ENCODE measurements at regions of chr2 and their contacts with region 1.

Region 1: DNA sequence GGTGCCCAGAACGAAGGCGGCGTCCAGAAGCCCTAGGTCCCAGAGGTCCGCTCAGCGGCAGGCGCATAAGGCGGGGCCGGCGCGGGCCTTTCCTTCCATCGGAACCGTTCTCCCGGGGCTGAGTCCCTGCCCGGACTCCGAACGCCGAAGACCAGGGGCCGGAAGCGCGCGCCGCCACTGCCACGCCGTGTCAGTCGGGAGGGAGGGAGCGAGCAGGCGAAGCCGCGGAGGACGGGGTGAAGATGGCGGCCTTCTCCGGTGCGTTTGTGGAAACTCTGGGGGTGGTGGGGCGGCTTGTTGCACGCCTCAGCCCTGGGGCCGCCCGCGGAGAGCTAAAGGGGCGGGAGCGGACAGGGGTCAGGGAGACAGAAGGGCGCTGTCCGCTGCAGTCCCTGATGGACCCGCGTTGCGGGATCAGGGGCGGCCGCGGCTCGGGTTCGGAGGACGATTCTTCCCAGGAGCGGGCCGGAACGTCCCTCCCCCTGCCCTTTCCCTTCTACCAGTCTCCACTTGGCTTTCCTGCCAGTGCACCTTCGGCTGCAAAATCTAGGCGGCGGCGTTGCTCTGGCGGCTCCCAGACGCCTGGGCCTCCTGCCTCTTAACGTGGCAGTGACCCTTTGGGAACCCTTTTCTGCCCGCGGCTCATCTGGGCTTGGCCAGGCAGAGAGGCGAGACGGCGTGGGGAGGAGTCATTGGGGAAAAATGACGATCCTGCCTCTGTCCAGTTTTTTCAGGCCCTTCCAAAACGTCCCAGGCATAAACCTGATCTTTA is at the start of gene DDX1:
- DNase-seq: peak; percentile 90
- ATAC-seq: peak; percentile 91
- H3K4me3 ChIP-seq: peak within 1 kb of the TSS; percentile 71 to 97 (median 92)
- H3K4me3 Mint-ChIP-seq: peak within 1 kb of the TSS; percentile 90
- H3K27ac ChIP-seq: peak within 1 kb of the TSS; percentile 68 to 69
- H3K27ac Mint-ChIP-seq: peak within 1 kb of the TSS; percentile 90
- H3K4me1 ChIP-seq: peaks cover 12 to 18% of the 10 kb centered on the region in 2 donors
- H3K4me1 Mint-ChIP-seq: peaks cover 29% of the 10 kb centered on the region
- H3K27me3 ChIP-seq: no peaks in the 10 kb centered on the region
- H3K27me3 Mint-ChIP-seq: no peaks in the 10 kb centered on the region
- CTCF ChIP-seq: no peak
- total RNA-seq, gene DDX1: 50.5 and 52.6 TPM in 2 replicates

Region 2: GRCh38 chr2:15142069-15142873 is 449.6 kb before region 1 on chr2:
- CTCF ChIA-PET with region 1: no interaction called
- POLR2A ChIA-PET with region 1: no interaction called
- intact Hi-C with region 1: loop called (anchors 2 kb)
- DNase-seq: peak; percentile 88
- ATAC-seq: peak; percentile 97
- H3K4me3 ChIP-seq: peak overlapping the region in 3 of 5 experiments; percentile 13 to 28 (median 18)
- H3K4me3 Mint-ChIP-seq: peak overlapping the region; percentile 40
- H3K27ac ChIP-seq: peak overlapping the region; percentile 47 to 69
- H3K27ac Mint-ChIP-seq: peak overlapping the region; percentile 76
- H3K4me1 ChIP-seq: peaks cover 14 to 17% of the 10 kb centered on the region in 2 donors
- H3K4me1 Mint-ChIP-seq: peaks cover 20% of the 10 kb centered on the region
- H3K27me3 ChIP-seq: peaks cover 0 to 2% (median 0%) of the 10 kb centered on the region in 4 experiments
- H3K27me3 Mint-ChIP-seq: no peaks in the 10 kb centered on the region
- CTCF ChIP-seq: no peak

Region 3: DNA sequence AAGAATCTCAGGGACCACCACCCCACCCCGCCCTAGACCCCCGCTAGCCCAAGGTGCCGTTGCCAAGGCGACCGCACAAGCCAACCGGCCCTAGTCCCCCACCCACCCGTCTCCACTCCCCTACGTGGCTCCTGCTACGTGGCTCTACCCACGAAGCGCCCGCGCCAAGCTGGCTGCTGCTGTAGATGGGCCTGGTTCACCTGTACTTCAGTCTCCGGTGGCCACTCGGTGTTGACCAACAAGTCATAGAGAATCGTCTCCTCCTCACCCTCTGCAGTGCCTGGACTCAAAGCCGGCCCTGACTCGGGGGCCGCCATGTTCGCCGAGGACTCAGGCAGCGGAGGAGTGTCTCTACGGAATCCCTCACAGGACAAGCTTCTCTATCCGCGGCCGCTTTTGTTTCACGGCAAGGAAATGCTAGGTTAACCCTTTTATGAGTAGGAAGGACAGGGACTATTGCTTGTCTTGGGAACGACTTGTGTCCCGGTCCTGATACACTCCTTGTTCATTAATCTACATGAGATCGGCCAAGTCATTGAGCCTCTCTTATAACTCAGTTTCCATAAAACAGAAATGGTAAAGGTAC is 30.8 kb before region 1 on chr2 and contains the start of gene NBAS:
- CTCF ChIA-PET with region 1: no interaction called
- POLR2A ChIA-PET with region 1: interaction called, 3 read pairs
- intact Hi-C with region 1: loop called (anchors 1 kb)
- DNase-seq: peak; percentile 86
- ATAC-seq: peak; percentile 87
- H3K4me3 ChIP-seq: peak within 1 kb of the TSS; percentile 72 to 89 (median 76)
- H3K4me3 Mint-ChIP-seq: peak within 1 kb of the TSS; percentile 100
- H3K27ac ChIP-seq: peak within 1 kb of the TSS; percentile 52 to 69
- H3K27ac Mint-ChIP-seq: peak within 1 kb of the TSS; percentile 98
- H3K4me1 ChIP-seq: peaks cover 12 to 15% of the 10 kb centered on the region in 2 donors
- H3K4me1 Mint-ChIP-seq: peaks cover 38% of the 10 kb centered on the region
- H3K27me3 ChIP-seq: no peaks in the 10 kb centered on the region
- H3K27me3 Mint-ChIP-seq: peaks cover 7% of the 10 kb centered on the region
- CTCF ChIP-seq: no peak
- total RNA-seq, gene NBAS: 37.3 and 37.7 TPM in 2 replicates

Region 4: GRCh38 chr2:15577071-15577735 is 14.7 kb before region 1 on chr2:
- CTCF ChIA-PET with region 1: interaction called, 35 read pairs
- POLR2A ChIA-PET with region 1: interaction called, 3 read pairs
- intact Hi-C with region 1: no loop called
- DNase-seq: peak; percentile 80
- ATAC-seq: peak; percentile 94
- H3K4me3 ChIP-seq: no peak overlapping the region
- H3K4me3 Mint-ChIP-seq: no peak overlapping the region
- H3K27ac ChIP-seq: no peak overlapping the region
- H3K27ac Mint-ChIP-seq: no peak overlapping the region
- H3K4me1 ChIP-seq: peaks cover 1 to 6% of the 10 kb centered on the region in 2 donors
- H3K4me1 Mint-ChIP-seq: peaks cover 7% of the 10 kb centered on the region
- H3K27me3 ChIP-seq: peaks cover 0 to 5% (median 2%) of the 10 kb centered on the region in 4 experiments
- H3K27me3 Mint-ChIP-seq: no peaks in the 10 kb centered on the region
- CTCF ChIP-seq: peak; percentile 87

Measured in B cell (primary cell).